ENCODE measurements at regions of chr15 and their contacts with region 1.

Region 1: GRCh38 chr15:45604326-45604725 is 17.1 kb downstream of the BLOC1S6 start:
- DNase-seq: no peak
- ATAC-seq: no peak
- H3K4me3 ChIP-seq: no peak overlapping the region
- H3K4me3 Mint-ChIP-seq: no peak overlapping the region
- H3K27ac ChIP-seq: no peak overlapping the region
- H3K27ac Mint-ChIP-seq: peak overlapping the region; percentile 3 to 42
- H3K4me1 ChIP-seq: no peaks in the 10 kb centered on the region
- H3K4me1 Mint-ChIP-seq: peaks cover 6 to 18% (median 13%) of the 10 kb centered on the region in 3 donors
- H3K27me3 ChIP-seq: no peaks in the 10 kb centered on the region
- H3K27me3 Mint-ChIP-seq: no peaks in the 10 kb centered on the region

Region 2: DNA sequence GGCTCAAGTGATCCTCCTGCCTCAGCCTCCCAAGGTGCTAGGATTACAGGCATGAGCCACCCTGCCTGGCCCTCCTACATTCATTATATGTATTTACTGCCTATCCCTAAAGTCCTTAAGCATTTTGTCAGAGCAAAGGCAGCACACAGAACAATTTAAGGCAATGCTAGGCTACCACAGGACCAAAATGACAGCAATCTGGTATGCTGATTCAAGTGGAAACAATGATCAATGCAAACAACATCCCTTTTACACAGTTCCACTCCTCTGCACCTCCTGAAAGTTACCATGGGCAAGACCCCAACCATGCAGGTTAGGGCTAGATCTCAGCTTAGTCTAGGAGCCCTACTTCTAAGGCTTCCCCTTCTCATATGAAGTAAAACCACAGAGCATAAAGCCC is 981.1 kb before region 1 on chr15:
- CTCF ChIA-PET with region 1: no interaction called
- POLR2A ChIA-PET with region 1: no interaction called
- DNase-seq: no peak
- ATAC-seq: no peak
- H3K4me3 ChIP-seq: no peak overlapping the region
- H3K4me3 Mint-ChIP-seq: no peak overlapping the region
- H3K27ac ChIP-seq: no peak overlapping the region
- H3K27ac Mint-ChIP-seq: peak overlapping the region; percentile 11 to 25
- H3K4me1 ChIP-seq: no peaks in the 10 kb centered on the region
- H3K4me1 Mint-ChIP-seq: peaks cover 0 to 6% (median 4%) of the 10 kb centered on the region in 3 donors
- H3K27me3 ChIP-seq: no peaks in the 10 kb centered on the region
- H3K27me3 Mint-ChIP-seq: no peaks in the 10 kb centered on the region

Region 3: GRCh38 chr15:45587095-45587860 is 17.0 kb before region 1 on chr15 and contains the start of gene BLOC1S6:
- CTCF ChIA-PET with region 1: interaction called in 1 of 2 experiments, 5 read pairs
- POLR2A ChIA-PET with region 1: interaction called in 1 of 2 experiments, 13 read pairs
- DNase-seq: peak; percentile 77 to 94 (median 86)
- ATAC-seq: peak; percentile 78 to 86 (median 81)
- H3K4me3 ChIP-seq: peak within 1 kb of the TSS; percentile 78 to 89
- H3K4me3 Mint-ChIP-seq: peak within 1 kb of the TSS; percentile 96 to 100 (median 100)
- H3K27ac ChIP-seq: peak within 1 kb of the TSS; percentile 97
- H3K27ac Mint-ChIP-seq: peak within 1 kb of the TSS; percentile 100
- H3K4me1 ChIP-seq: peaks cover 21 to 27% of the 10 kb centered on the region in 2 experiments
- H3K4me1 Mint-ChIP-seq: peaks cover 36 to 51% (median 50%) of the 10 kb centered on the region in 3 donors
- H3K27me3 ChIP-seq: no peaks in the 10 kb centered on the region
- H3K27me3 Mint-ChIP-seq: no peaks in the 10 kb centered on the region
- total RNA-seq, gene BLOC1S6: 37.5 to 59.5 (median 40.5) TPM

Region 4: DNA sequence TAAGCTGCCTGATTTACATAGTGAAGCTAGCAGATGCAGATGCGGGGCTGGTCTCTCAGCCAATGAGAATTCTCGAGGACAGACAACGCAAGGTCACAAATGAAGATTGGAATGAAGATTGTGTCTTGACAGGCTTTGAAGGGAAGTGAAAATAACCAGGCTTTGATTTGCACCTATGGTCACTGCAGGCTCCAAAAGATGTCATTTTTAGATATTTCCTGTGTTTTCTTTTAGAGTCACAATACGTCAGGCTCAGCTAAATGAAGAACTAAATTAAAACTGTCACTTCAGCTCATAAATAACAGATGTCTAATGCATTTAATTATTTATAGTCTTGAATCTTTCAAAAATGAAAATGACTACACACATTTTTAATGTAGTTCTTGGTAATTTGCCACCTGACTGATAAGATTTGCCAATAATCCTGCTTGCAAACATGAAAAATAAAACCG is 130.0 kb after region 1 on chr15:
- CTCF ChIA-PET with region 1: no interaction called
- POLR2A ChIA-PET with region 1: no interaction called
- DNase-seq: no peak
- ATAC-seq: no peak
- H3K4me3 ChIP-seq: no peak overlapping the region
- H3K4me3 Mint-ChIP-seq: no peak overlapping the region
- H3K27ac ChIP-seq: no peak overlapping the region
- H3K27ac Mint-ChIP-seq: no peak overlapping the region
- H3K4me1 ChIP-seq: no peaks in the 10 kb centered on the region
- H3K4me1 Mint-ChIP-seq: no peaks in the 10 kb centered on the region
- H3K27me3 ChIP-seq: peaks cover 3 to 20% of the 10 kb centered on the region in 2 experiments
- H3K27me3 Mint-ChIP-seq: peaks cover 16 to 42% of the 10 kb centered on the region in 2 donors

Region 5: DNA sequence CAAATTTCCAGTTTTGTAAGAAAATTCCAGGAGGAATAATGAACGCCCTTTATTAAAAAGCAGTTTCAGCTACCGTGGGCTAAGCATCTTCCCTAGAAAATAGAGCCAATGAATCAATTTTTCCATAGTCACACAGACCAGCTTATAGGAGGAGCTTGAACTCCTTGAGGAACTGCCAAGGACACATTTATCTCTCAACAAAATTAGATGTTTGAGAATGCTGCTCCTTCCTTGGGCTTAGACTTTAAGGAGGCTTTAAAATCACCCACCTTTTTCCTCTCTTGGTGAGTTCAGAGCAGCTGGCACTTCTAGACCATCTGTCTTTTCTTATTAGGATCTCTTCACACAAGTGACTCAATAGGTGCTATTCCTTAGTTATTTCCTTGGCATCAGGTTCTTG is 618.5 kb after region 1 on chr15:
- CTCF ChIA-PET with region 1: no interaction called
- POLR2A ChIA-PET with region 1: no interaction called
- DNase-seq: no peak
- ATAC-seq: no peak
- H3K4me3 ChIP-seq: no peak overlapping the region
- H3K4me3 Mint-ChIP-seq: no peak overlapping the region
- H3K27ac ChIP-seq: no peak overlapping the region
- H3K27ac Mint-ChIP-seq: no peak overlapping the region
- H3K4me1 ChIP-seq: no peaks in the 10 kb centered on the region
- H3K4me1 Mint-ChIP-seq: no peaks in the 10 kb centered on the region
- H3K27me3 ChIP-seq: no peaks in the 10 kb centered on the region
- H3K27me3 Mint-ChIP-seq: no peaks in the 10 kb centered on the region